ENCODE measurements at regions of chr4 and their contacts with region 1.

Region 1: GRCh38 chr4:98467627-98468072 is 190.8 kb downstream of the TSPAN5 start:
- DNase-seq: peak; percentile 86
- H3K4me3 Mint-ChIP-seq: peak overlapping the region; percentile 71
- H3K27ac Mint-ChIP-seq: no peak overlapping the region
- H3K4me1 Mint-ChIP-seq: peaks cover 11% of the 10 kb centered on the region
- H3K27me3 Mint-ChIP-seq: no peaks in the 10 kb centered on the region
- CTCF ChIP-seq: peak; percentile 68

Region 2: DNA sequence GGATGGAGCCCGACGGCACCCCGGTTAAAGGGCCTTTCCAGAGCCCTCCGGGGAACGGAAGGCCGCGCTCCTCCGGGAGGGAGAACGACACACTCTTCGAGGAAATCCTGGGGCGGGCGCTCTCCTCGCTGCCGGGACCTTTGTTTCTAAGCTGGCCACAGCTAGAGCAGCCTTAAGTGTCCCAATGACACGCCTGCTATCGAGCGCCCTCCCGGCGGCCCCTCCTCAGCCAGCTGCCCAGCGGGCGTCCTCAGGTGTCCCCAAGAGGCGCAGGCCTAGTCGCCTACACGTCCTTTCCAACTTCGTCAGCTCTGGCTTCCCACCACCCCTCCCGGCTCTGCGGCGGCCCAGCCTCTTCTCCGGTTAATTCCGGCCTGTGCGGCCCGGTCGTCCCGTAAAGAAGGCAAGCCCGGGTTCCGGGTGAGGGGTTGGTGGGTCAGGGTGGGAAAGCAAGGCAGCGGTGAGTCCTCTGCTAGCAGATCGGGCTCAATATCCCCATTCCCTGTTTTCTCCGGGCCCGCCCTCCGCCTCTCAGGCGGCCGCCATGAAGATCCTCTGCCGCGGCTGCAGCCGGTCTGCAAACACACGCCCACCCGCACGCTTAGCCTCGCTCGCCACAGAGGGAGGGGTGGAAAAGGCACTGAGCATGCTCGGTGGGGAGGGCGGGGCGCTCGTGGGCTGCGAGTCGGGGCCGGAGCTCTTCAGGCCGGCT is 206.9 kb before region 1 on chr4:
- CTCF ChIA-PET with region 1: no interaction called
- POLR2A ChIA-PET with region 1: no interaction called
- intact Hi-C with region 1: loop called (anchors 1 kb)
- DNase-seq: peak; percentile 95
- H3K4me3 Mint-ChIP-seq: peak overlapping the region; percentile 89
- H3K27ac Mint-ChIP-seq: peak overlapping the region; percentile 86
- H3K4me1 Mint-ChIP-seq: peaks cover 35% of the 10 kb centered on the region
- H3K27me3 Mint-ChIP-seq: no peaks in the 10 kb centered on the region
- CTCF ChIP-seq: no peak

Region 3: GRCh38 chr4:98482847-98483806 is 15.5 kb after region 1 on chr4:
- CTCF ChIA-PET with region 1: interaction called, 12 read pairs
- POLR2A ChIA-PET with region 1: interaction called, 3 read pairs
- intact Hi-C with region 1: no loop called
- DNase-seq: peak; percentile 45
- H3K4me3 Mint-ChIP-seq: peak overlapping the region; percentile 51
- H3K27ac Mint-ChIP-seq: peak overlapping the region; percentile 95
- H3K4me1 Mint-ChIP-seq: peaks cover 28% of the 10 kb centered on the region
- H3K27me3 Mint-ChIP-seq: no peaks in the 10 kb centered on the region
- CTCF ChIP-seq: no peak

Region 4: GRCh38 chr4:98658287-98659105 is 190.8 kb after region 1 on chr4 and contains the start of gene TSPAN5:
- CTCF ChIA-PET with region 1: interaction called, 9 read pairs
- POLR2A ChIA-PET with region 1: interaction called, 7 read pairs
- intact Hi-C with region 1: loop called (anchors 2 kb)
- DNase-seq: peak; percentile 74
- H3K4me3 Mint-ChIP-seq: peak within 1 kb of the TSS; percentile 81
- H3K27ac Mint-ChIP-seq: no peak within 1 kb of the TSS
- H3K4me1 Mint-ChIP-seq: peaks cover 50% of the 10 kb centered on the region
- H3K27me3 Mint-ChIP-seq: no peaks in the 10 kb centered on the region
- CTCF ChIP-seq: no peak
- total RNA-seq, gene TSPAN5: 18.5 and 19.8 TPM in 2 replicates

Region 5: GRCh38 chr4:98828801-98829200 is 361.2 kb after region 1 on chr4:
- CTCF ChIA-PET with region 1: interaction called, 3 read pairs
- POLR2A ChIA-PET with region 1: no interaction called
- intact Hi-C with region 1: loop called (anchors 2 kb)
- DNase-seq: peak; percentile 42
- H3K4me3 Mint-ChIP-seq: no peak overlapping the region
- H3K27ac Mint-ChIP-seq: no peak overlapping the region
- H3K4me1 Mint-ChIP-seq: peaks cover 9% of the 10 kb centered on the region
- H3K27me3 Mint-ChIP-seq: no peaks in the 10 kb centered on the region
- CTCF ChIP-seq: no peak

Region 6: DNA sequence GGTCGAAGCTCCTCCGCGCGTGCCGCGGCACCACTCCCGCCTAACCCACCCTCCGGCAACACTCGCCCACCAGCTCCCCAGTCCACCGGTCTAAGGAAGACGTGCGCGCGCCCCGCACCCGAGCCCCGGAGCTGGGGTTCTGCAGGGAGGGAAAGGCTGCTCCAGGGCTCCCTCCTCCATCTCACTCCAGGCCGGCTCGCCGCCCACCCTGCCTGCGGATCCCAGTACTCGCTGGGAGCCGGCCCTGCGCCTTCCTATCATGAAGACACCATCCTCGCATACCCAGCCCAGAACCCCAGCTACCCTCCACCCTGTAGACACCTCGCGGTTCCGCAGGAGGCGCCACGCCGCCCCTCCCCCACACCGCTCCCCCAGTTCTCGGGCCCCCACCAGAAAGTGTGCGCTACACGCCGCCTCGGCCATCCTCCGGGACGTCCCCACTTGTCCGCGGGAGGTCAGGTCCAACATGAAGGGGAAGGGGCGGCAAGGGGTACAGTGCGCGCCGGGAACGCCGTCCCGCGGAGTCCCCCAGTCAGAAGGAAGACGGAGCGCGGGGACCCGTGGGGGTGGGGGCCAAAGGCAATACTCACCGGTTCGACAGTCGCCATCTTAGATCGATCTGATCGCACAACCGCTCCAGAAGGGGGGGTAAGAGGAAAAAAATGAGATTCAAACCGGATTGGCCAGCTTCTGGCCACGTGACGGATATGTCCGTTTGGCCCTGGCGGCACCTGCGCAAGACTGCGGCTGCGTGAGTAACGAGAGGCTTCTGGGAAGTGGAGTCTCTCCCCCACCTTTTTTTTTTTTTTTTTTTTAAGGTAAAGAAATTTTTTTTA is 461.1 kb after region 1 on chr4 and contains the start of gene EIF4E:
- CTCF ChIA-PET with region 1: interaction called, 11 read pairs
- POLR2A ChIA-PET with region 1: interaction called, 7 read pairs
- intact Hi-C with region 1: loop called (anchors 1 kb)
- DNase-seq: peak; percentile 99
- H3K4me3 Mint-ChIP-seq: peak within 1 kb of the TSS; percentile 96
- H3K27ac Mint-ChIP-seq: peak within 1 kb of the TSS; percentile 93
- H3K4me1 Mint-ChIP-seq: peaks cover 13% of the 10 kb centered on the region
- H3K27me3 Mint-ChIP-seq: no peaks in the 10 kb centered on the region
- CTCF ChIP-seq: no peak
- total RNA-seq, gene EIF4E: 104 and 106 TPM in 2 replicates

Region 7: DNA sequence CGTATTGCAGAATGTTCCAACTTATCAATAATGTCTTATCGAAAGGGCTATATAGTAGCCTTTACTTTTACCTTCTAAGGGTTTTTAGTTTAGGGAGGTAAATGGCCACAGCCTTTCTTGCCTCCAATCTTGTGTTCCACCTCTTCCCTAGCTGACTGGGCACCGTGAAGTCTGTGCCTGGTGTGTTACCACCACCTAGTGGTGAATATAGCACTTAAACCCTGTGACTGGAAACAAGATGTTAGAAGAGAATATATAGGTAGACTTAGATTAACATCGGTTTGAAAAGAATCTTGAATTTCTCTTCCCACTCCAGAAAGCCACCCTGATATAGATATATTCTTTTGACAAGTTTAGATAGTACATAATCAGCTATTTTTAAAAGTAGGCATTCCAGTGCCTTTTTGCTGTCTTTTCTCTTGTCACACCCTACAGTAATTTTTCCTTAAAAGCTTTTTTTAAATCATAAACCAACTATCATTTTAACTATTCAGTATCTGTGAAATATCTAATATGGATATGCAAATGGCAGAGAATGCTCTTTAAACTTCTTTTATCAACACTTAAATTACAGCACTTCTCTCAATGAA is 995.3 kb after region 1 on chr4:
- CTCF ChIA-PET with region 1: interaction called, 3 read pairs
- POLR2A ChIA-PET with region 1: no interaction called
- intact Hi-C with region 1: loop called (anchors 5 kb)
- DNase-seq: peak; percentile 82
- H3K4me3 Mint-ChIP-seq: no peak overlapping the region
- H3K27ac Mint-ChIP-seq: no peak overlapping the region
- H3K4me1 Mint-ChIP-seq: peaks cover 11% of the 10 kb centered on the region
- H3K27me3 Mint-ChIP-seq: peaks cover 12% of the 10 kb centered on the region
- CTCF ChIP-seq: peak; percentile 84